Ovary (tissue), 10 donors: ENCODE measurements at regions of chr3 and their contacts with region 1.

Region 1: DNA sequence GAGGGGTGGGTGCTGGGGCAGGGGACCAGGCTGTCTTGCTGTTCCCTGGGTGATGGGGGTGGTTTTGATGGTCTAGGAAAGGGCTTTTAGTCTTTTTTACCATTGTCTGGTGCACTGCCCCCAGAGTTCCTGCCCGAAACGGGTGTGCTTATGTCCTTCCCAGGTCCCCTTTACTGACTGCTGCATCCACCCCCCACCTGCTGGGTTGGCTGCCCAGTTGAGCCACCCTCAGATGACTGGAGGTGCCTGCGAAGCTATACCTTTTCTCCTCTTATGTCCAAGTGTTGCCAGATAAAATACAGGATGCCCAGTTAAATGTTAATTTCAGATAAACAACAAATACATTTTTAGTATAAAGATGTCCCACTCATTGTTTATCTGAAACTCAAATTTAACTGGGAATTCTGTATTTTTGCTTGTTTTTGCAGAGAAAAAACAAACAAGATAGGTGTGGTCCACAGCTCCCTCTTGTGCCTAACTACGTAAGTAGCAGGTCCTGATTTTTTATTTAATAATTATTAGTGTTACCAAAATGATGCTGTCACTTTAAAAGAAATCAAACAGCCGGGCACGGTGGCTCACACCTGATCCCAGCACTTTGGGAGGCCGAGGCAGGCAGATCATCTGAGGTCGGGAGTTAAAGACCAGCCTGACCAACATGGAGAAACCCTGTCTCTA is 6.1 kb upstream of the RPP14 start:
- DNase-seq: no peak
- H3K4me3 ChIP-seq: no peak overlapping the region
- H3K27ac ChIP-seq: no peak overlapping the region
- H3K4me1 ChIP-seq: no peaks in the 10 kb centered on the region
- H3K27me3 ChIP-seq: no peaks in the 10 kb centered on the region
- CTCF ChIP-seq: peak; percentile 55 to 59 (median 58)
- EP300 ChIP-seq: no peak
- POLR2A ChIP-seq: no peak

Region 2: DNA sequence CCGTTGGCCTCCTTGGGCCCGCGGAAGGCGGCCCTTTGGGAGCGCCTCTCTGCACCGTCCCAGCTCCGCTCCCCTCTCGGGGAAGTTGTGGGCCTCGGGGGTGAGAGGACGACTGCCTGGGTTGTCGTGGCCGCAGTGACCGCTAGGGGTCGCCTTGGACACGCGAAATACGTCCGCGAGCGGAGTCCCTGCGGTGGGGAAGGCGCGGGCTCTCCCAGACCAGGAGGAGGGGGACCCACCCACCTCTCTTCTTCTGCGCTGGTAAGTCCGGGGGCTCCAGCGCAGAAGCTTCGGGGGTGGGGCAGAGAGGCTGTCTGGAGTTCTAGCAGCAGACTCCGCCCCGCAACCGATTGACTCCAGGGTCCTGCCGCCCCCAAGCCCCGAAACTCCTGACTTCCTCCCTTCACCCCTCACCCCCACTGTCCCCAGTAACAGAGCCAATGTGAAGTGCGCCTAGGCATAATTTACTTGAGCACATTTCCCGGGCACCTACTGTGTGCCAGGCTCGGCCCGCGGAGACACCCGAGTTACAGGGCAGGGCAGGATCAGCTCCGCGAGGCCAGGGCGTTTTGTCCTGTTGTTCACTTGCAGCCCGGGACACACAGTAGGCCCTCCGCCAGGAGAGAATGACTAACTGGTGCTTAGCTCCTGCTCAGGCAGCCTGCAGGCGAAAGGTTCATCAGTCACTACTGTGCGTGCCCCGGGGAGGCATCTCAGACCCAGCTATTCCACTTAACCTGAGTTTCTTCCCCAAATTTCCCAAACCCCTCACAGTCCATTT is 122.0 kb before region 1 on chr3:
- intact Hi-C with region 1: loop called in 2 of 4 experiments (anchors 5 kb)
- DNase-seq: peak; percentile 90 to 96 (median 95)
- H3K4me3 ChIP-seq: peak overlapping the region; percentile 44
- H3K27ac ChIP-seq: no peak overlapping the region
- H3K4me1 ChIP-seq: peaks cover 10% of the 10 kb centered on the region
- H3K27me3 ChIP-seq: no peaks in the 10 kb centered on the region
- CTCF ChIP-seq: peak; percentile 88 to 94 (median 92)
- EP300 ChIP-seq: no peak
- POLR2A ChIP-seq: no peak

Region 3: GRCh38 chr3:58188173-58188564 is 111.8 kb before region 1 on chr3:
- intact Hi-C with region 1: loop called in 3 of 4 experiments (anchors 2 to 5 kb)
- DNase-seq: no peak
- H3K4me3 ChIP-seq: no peak overlapping the region
- H3K27ac ChIP-seq: no peak overlapping the region
- H3K4me1 ChIP-seq: no peaks in the 10 kb centered on the region
- H3K27me3 ChIP-seq: no peaks in the 10 kb centered on the region
- CTCF ChIP-seq: no peak
- EP300 ChIP-seq: no peak
- POLR2A ChIP-seq: no peak

Region 4: DNA sequence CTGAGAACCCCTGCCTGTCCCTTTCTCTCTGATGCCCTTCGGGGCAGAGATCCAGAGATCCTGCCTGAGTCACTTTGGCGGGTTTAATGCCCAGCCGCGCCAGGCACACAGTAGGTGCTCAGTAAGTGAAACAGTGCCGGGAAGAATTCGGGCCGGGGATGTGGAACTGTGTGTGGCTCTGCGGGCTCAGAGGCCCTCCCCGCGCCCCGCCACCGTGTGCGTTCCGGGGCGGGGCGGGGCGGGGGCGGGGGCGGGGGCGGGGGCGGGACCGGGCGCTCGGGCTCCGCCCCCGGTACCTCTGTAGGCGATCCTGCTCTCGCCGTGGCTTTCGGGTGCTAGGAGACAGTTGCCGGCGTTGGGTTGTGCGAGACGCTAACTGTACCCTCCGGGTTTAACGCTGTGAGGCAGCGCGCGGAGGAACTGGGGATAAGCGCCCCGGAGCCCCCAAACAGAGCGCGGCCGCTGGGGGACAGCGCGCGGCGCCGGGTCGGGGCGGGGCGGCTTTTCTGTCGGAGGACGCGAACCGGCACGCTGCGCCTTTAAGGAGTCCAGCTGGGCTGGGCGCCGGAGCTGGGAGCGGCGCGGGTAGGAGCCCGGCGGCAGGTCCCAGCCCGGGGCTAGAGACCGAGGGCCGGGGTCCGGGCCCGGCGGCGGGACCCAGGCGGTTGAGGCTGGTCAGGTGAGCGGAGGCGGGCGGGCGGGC is 62.6 kb before region 1 on chr3 and contains the start of gene ABHD6:
- intact Hi-C with region 1: loop called (anchors 5 to 10 kb)
- DNase-seq: peak; percentile 76 to 90 (median 83)
- H3K4me3 ChIP-seq: peak within 1 kb of the TSS; percentile 68
- H3K27ac ChIP-seq: peak within 1 kb of the TSS; percentile 67 to 68
- H3K4me1 ChIP-seq: peaks cover 4% of the 10 kb centered on the region
- H3K27me3 ChIP-seq: no peaks in the 10 kb centered on the region
- CTCF ChIP-seq: peak in 1 of 3 donors; percentile 42
- EP300 ChIP-seq: no peak
- POLR2A ChIP-seq: peak; percentile 21
- total RNA-seq, gene ABHD6: 8.2 to 11.3 (median 10.5) TPM